ENCODE measurements at regions of chr1 and their contacts with region 1.

Region 1: DNA sequence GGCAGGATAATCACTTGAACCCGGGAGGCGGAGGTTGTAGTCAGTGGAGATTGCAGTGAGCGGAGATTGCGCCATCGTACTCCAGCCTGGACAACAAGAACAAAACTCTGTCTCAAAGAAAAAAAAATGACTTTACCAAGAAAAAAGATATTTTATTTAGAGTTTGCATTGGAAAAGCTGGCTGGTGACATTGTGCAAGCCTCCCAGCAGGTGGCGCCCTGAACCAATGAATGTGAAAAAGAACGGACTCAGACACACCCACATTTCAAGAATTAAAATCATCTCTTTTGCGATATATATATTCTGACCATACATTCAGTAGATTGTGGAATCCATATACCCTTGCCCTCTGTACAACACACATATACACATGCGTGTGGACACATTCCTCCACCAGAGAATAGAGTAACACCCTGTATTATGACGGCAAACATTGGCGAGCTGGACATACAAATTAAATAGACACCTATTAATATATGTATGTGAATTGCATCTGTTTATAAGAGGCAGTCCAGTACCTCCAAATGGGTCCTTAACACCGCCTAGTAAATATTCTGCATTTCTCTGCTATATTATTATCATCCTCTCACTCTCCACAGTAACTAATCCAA is 39.0 kb upstream of the CADM3 start:
- DNase-seq: peak; percentile 57 to 86 (median 74)
- H3K4me3 ChIP-seq: no peak overlapping the region
- H3K27ac ChIP-seq: no peak overlapping the region
- H3K4me1 ChIP-seq: no peaks in the 10 kb centered on the region
- H3K27me3 ChIP-seq: peaks cover 0 to 6% (median 2%) of the 10 kb centered on the region in 5 experiments

Region 2: DNA sequence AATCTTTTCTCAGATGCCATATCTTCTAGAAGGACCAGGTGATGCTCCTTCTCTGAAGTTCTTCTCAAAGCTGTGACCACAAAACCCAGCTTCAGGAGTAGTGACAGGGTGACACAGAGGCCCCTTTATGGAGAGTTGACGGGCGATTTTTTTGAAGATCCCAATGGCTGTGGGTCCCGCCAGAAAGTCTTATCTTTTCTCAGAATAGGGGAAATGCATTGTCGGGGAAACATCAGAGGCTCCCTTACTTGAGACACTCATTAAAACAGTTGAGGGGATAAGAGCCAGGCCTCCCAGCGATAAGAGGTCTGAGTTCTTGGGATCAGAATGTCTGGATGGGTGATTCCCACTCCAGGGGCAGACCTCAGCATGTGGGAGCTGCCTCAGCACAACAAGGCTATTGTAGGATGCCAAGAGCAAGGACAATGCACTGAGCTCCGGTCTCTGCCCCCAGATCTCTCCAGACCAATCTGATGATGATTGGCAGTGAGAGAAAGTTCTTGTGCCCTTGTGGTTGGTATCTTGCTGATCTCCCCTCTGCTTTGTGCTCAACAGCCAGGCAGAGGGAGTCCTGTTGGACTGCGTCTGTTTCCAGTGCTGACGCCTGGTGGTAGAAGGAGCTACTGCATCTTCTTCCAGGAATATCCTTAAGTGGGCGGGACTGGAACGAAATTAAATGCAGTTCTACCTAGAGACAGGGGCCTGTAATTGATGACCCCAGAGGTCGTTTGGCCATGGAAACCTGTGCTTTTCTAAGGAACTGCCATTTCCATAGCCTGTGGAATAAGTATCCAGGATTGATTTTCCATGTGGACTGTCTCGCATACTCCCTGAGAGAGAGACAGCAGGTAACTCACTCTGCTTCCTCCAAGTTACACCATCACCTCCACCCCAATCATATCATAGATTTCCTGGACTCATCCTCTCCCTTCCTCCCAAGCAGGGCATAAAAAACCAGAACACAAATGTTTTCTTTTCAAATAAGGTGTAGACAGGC is 65.5 kb after region 1 on chr1:
- CTCF ChIA-PET with region 1: interaction called, 11 read pairs
- POLR2A ChIA-PET with region 1: no interaction called
- DNase-seq: peak; percentile 78 to 90 (median 83)
- H3K4me3 ChIP-seq: peak overlapping the region in 1 of 7 experiments; percentile 5
- H3K27ac ChIP-seq: no peak overlapping the region
- H3K4me1 ChIP-seq: peaks cover 0 to 46% (median 31%) of the 10 kb centered on the region in 4 experiments
- H3K27me3 ChIP-seq: peaks cover 0 to 2% (median 0%) of the 10 kb centered on the region in 5 experiments

Measured in common myeloid progenitor, CD34-positive (primary cell).